ENCODE measurements at regions of chr1 and their contacts with region 1.

Region 1: GRCh38 chr1:97243973-97244560 is 522.5 kb downstream of the PTBP2 start:
- DNase-seq: peak; percentile 49
- ATAC-seq: no peak
- H3K4me3 ChIP-seq: no peak overlapping the region
- H3K27ac ChIP-seq: no peak overlapping the region
- H3K4me1 ChIP-seq: no peaks in the 10 kb centered on the region
- H3K27me3 ChIP-seq: no peaks in the 10 kb centered on the region
- CTCF ChIP-seq: peak; percentile 79

Region 2: DNA sequence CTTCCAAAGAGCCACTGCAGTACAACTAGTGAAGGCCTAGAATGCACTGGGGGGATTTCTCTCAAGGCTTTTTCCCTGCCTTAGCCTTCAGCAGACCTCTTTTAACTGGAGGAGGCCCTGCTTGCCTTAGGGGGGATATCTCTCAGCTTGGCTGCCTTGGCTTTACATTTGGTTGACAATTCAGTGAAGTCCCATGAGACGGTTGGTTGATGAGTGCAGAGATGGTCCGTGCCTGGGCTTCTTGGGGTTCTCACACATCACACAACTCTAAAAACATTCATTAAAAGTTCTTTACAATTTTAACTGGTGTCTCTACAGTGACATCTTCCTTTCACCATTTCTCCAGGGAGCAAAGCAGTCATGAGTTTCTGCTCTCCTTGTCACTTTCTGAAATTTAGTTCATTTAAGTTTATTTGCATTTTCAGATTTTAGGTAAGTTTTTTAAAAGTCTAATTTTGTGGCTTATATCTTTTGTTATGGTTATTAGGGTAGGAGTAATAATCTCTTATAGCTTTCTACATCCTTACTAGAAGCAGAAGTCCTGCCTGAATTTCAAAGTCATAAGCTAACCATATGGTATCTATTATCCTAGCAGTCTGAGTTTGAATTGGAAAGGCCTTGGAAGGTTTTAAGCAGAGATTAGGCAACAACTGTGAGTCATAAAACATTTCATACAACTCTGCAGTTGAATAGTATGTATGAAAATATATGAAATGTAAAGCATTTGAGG is 189.2 kb after region 1 on chr1:
- CTCF ChIA-PET with region 1: no interaction called
- POLR2A ChIA-PET with region 1: no interaction called
- intact Hi-C with region 1: loop called (anchors 10 kb)
- DNase-seq: peak; percentile 29
- ATAC-seq: no peak
- H3K4me3 ChIP-seq: no peak overlapping the region
- H3K27ac ChIP-seq: no peak overlapping the region
- H3K4me1 ChIP-seq: no peaks in the 10 kb centered on the region
- H3K27me3 ChIP-seq: no peaks in the 10 kb centered on the region
- CTCF ChIP-seq: no peak

Region 3: GRCh38 chr1:97524211-97524610 is 280.1 kb after region 1 on chr1:
- CTCF ChIA-PET with region 1: interaction called, 3 read pairs
- POLR2A ChIA-PET with region 1: no interaction called
- intact Hi-C with region 1: loop called (anchors 2 kb)
- DNase-seq: no peak
- ATAC-seq: no peak
- H3K4me3 ChIP-seq: no peak overlapping the region
- H3K27ac ChIP-seq: no peak overlapping the region
- H3K4me1 ChIP-seq: no peaks in the 10 kb centered on the region
- H3K27me3 ChIP-seq: no peaks in the 10 kb centered on the region
- CTCF ChIP-seq: no peak

Region 4: GRCh38 chr1:97820470-97821188 is 576.6 kb after region 1 on chr1:
- CTCF ChIA-PET with region 1: no interaction called
- POLR2A ChIA-PET with region 1: no interaction called
- intact Hi-C with region 1: loop called (anchors 10 kb)
- DNase-seq: peak; percentile 76
- ATAC-seq: peak; percentile 72
- H3K4me3 ChIP-seq: no peak overlapping the region
- H3K27ac ChIP-seq: no peak overlapping the region
- H3K4me1 ChIP-seq: no peaks in the 10 kb centered on the region
- H3K27me3 ChIP-seq: no peaks in the 10 kb centered on the region
- CTCF ChIP-seq: peak; percentile 82

Region 5: GRCh38 chr1:97870589-97870988 is 626.5 kb after region 1 on chr1:
- CTCF ChIA-PET with region 1: no interaction called
- POLR2A ChIA-PET with region 1: no interaction called
- intact Hi-C with region 1: no loop called
- DNase-seq: no peak
- ATAC-seq: no peak
- H3K4me3 ChIP-seq: no peak overlapping the region
- H3K27ac ChIP-seq: no peak overlapping the region
- H3K4me1 ChIP-seq: no peaks in the 10 kb centered on the region
- H3K27me3 ChIP-seq: no peaks in the 10 kb centered on the region
- CTCF ChIP-seq: no peak

Measured in PC-3 (cell line).